ENCODE measurements at regions of chr11 and their contacts with region 1.

Region 1: DNA sequence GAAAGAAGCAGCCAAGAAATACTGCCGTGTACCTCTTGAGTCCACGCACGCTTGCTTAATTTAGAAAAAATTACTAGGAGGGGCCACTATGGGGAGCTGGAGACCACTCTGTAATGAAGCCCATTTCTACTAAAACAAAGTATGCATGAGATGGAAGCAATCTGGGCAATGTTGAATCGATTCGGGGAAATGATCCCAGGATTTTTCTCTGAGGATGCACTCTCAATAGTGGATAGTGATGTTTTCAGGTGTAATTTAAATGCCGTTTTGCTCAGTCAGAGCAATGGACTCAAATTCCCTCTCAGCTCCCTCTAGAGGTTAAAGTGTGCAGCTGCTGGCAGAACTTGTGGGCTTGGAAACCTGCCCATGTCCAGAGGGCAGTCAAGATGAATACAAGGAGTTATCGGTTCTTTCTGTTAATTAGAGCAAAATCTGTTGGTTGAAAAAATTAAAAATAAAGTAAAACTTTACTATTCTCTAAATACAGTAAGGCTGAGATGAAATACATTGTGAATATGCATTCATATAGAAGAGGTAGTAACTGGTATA is 64.1 kb downstream of the ME3 start:
- DNase-seq: peak; percentile 55
- H3K4me3 ChIP-seq: peak overlapping the region; percentile 20
- H3K27ac ChIP-seq: peak overlapping the region; percentile 35
- H3K4me1 ChIP-seq: peaks cover 47% of the 10 kb centered on the region
- H3K27me3 ChIP-seq: no peaks in the 10 kb centered on the region
- CTCF ChIP-seq: peak; percentile 97

Region 2: DNA sequence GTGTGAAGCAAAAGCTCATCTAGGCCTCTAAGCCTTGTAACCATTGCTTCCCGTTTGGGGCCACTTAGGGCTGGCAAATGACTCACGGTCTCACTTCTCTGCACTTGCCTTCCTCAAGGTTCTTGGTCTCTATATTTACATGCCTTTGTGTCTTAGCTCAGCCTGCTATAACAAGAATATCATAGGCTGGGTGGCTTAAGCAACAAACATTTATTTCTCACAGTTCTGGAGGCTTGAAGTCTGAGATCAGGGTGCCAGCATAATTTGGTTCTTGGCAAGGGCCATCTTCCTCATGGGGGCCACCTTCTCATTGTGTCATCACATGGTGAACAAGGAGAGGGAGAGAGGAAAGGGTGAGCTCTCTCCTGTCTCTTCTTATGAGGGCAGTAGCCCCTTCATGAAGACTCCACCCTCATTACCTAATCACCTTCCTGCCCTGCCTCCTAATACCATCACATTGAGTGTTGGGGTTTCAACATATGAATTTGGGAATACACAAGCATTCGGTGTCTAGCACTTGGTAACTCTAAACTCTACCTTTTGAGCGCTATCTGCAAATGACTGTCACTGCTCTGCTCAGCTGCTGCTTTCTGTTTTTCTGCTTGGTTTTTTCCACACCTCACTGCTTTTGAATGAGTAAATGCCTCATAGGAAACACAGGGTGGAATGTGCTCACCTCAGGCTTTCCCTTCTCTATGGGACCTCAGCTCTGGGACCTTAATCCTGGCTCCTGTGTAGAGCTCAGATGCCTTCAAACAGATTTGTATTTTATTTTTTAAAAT is 80.3 kb after region 1 on chr11:
- intact Hi-C with region 1: no loop called
- DNase-seq: no peak
- H3K4me3 ChIP-seq: no peak overlapping the region
- H3K27ac ChIP-seq: peak overlapping the region; percentile 24
- H3K4me1 ChIP-seq: peaks cover 35% of the 10 kb centered on the region
- H3K27me3 ChIP-seq: no peaks in the 10 kb centered on the region
- CTCF ChIP-seq: no peak

Region 3: GRCh38 chr11:86818466-86819192 is 210.3 kb after region 1 on chr11:
- intact Hi-C with region 1: loop called (anchors 5 kb)
- DNase-seq: no peak
- H3K4me3 ChIP-seq: no peak overlapping the region
- H3K27ac ChIP-seq: no peak overlapping the region
- H3K4me1 ChIP-seq: peaks cover 32% of the 10 kb centered on the region
- H3K27me3 ChIP-seq: no peaks in the 10 kb centered on the region
- CTCF ChIP-seq: peak; percentile 81